WTC11 (cell line): ENCODE measurements at regions of chr12 and their contacts with region 1.

Region 1: DNA sequence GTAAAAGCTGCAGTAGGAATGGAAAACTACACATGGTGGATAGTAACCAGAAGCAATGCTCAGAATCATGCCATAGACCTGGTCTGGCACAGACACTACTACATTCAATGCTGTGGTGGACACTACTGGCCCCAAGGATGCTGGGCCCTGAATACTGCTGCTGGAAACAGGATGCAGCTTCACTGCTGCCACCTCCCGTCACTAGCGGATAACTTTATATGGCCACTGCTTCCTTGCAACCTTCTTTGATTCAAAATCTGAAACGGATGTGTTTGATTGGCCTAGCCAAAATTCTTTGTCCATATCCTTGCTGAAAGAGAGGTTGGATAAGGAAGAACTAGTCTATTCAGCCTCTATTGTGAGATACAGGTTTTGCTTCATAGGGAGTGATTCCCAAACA is 30.7 kb downstream of the ADCY6 start:
- DNase-seq: no peak
- ATAC-seq: peak; percentile 45; the same call in 1 of the 2 replicates
- H3K4me3 Mint-ChIP-seq: no peak overlapping the region
- H3K27ac Mint-ChIP-seq: no peak overlapping the region
- H3K4me1 Mint-ChIP-seq: no peaks in the 10 kb centered on the region
- H3K27me3 Mint-ChIP-seq: no peaks in the 10 kb centered on the region; the same call in 1 of the 2 replicates
- CTCF ChIP-seq: no peak

Region 2: DNA sequence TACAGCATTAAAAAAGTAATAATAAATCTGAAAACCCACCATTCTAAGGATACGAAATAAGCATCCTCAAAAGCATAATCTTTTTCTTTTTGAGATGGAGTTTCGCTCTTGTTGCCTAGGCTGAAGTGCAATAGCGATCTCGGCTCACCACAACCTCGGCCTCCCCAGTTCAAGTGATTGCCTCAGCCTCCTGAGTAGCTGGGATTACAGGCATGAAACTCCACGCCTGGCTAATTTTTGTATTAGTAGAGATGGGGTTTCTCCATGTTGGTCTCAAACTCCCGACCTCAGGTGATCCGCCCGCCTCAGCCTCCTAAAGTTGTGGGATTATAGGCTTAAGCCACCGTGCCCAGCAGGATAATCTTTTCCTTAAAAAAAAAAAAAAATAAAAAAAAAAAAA is 46.0 kb before region 1 on chr12:
- CTCF ChIA-PET with region 1: no interaction called
- POLR2A ChIA-PET with region 1: no interaction called
- DNase-seq: no peak
- ATAC-seq: no peak
- H3K4me3 Mint-ChIP-seq: no peak overlapping the region
- H3K27ac Mint-ChIP-seq: no peak overlapping the region
- H3K4me1 Mint-ChIP-seq: peaks cover 12% of the 10 kb centered on the region
- H3K27me3 Mint-ChIP-seq: no peaks in the 10 kb centered on the region
- CTCF ChIP-seq: no peak

Region 3: DNA sequence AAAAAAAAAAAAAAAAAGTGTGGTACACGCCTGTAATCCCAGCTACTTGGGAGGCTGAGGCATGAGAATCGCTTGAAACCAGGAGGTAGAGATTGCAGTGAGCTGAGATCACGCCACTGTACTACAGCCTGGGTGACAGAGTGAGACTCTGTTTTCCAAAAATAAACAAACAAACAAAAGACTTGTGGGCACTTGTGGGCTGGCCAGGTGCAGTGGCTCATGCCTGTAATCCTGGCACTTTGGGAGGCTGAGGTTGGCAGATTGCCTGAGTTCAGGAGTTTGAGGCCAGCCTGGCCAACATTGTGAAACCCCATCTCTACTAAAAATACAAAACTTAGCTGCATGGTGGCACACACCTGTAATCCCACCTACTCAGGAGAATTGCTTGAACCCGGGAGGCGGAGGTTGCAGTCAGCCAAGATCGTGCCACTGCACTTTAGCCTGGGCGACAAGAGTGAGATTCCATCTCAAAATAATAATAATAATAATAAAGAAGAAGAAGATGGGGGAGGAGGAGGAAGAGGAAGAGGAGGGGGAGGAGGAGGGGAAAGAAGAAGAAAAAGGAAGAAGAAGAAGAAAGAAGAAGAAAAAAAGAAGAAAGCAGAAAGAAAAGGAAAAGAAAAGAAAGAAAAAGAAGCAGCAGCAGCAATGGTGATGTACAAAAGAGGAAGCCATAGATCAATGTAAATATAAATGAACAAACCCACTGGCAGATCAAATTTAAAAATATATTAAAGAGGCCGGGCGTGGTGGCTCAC is 13.8 kb before region 1 on chr12:
- CTCF ChIA-PET with region 1: interaction called, 14 read pairs
- POLR2A ChIA-PET with region 1: no interaction called
- DNase-seq: no peak
- ATAC-seq: no peak
- H3K4me3 Mint-ChIP-seq: no peak overlapping the region
- H3K27ac Mint-ChIP-seq: no peak overlapping the region
- H3K4me1 Mint-ChIP-seq: no peaks in the 10 kb centered on the region
- H3K27me3 Mint-ChIP-seq: peaks cover 7% of the 10 kb centered on the region; the same call in 1 of the 2 replicates
- CTCF ChIP-seq: no peak

Region 4: GRCh38 chr12:48788854-48789796 is 30.9 kb after region 1 on chr12 and contains the start of gene ADCY6:
- CTCF ChIA-PET with region 1: interaction called, 144 read pairs
- POLR2A ChIA-PET with region 1: interaction called, 8 read pairs
- DNase-seq: peak; percentile 80
- ATAC-seq: peak; percentile 66
- H3K4me3 Mint-ChIP-seq: peak within 1 kb of the TSS; percentile 94
- H3K27ac Mint-ChIP-seq: peak within 1 kb of the TSS; percentile 39; the same call in 1 of the 2 replicates
- H3K4me1 Mint-ChIP-seq: peaks cover 24% of the 10 kb centered on the region
- H3K27me3 Mint-ChIP-seq: peaks cover 28% of the 10 kb centered on the region
- CTCF ChIP-seq: no peak
- total RNA-seq, gene ADCY6: 11.9 to 12.8 TPM (median 12.2 TPM) in 3 replicates

Region 5: DNA sequence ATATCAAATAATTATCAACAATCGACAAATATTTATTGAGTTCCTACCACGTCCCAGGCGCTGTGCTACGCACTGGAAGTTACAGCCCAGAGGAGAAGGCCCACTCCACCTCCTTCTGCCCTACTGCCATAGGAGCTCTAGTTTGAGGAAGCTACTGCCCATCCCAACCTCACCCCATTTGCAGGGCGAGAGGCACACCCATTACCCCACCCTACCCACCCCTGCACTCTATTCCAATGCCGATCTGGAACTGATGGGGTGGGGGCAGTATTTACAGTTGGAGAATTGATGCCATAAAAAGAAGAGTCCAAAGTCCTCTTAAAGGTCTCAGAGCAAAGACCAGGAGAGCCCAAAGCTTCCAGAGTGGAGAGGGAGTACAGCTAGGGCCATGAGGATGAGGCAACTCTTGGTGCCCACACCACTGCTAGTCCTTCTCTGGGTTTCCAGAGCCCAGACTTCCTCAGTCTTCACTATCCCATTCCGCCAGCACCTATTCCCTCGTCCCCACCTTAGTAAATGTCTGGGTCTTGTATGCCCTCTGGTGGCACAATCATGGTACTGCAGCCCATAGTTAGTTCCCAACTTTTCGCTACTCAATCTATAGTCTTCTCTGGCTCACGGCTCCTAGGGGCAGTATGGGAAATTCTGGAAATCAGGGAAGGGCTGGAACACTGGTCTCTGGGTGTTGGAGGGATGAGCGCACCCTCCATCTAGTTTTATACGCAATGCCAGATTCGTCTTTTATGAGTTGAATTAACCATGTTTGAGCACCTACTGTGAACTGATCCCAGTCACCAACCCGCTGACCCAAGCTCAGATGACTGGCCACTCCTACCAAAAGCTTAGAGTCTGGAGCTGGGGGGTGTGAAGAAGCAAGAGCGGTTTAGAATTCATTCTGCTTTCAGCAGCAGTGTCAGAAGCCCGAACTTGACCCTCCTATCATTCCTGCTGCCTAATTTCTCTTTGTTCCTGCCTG is 37.5 kb after region 1 on chr12:
- CTCF ChIA-PET with region 1: interaction called, 144 read pairs
- POLR2A ChIA-PET with region 1: interaction called, 8 read pairs
- DNase-seq: peak; percentile 87
- ATAC-seq: peak; percentile 95
- H3K4me3 Mint-ChIP-seq: peak overlapping the region; percentile 29; the same call in 1 of the 2 replicates
- H3K27ac Mint-ChIP-seq: no peak overlapping the region
- H3K4me1 Mint-ChIP-seq: peaks cover 10% of the 10 kb centered on the region
- H3K27me3 Mint-ChIP-seq: peaks cover 5% of the 10 kb centered on the region; the same call in 1 of the 2 replicates
- CTCF ChIP-seq: peak; percentile 98